BJ (cell line): ENCODE measurements at regions of chr16 and their contacts with region 1.

Region 1: GRCh38 chr16:72787514-72788268 is 260.2 kb downstream of the ZFHX3 start:
- DNase-seq: peak; percentile 37
- H3K4me3 ChIP-seq: peak overlapping the region; percentile 43
- H3K27me3 ChIP-seq: no peaks in the 10 kb centered on the region
- CTCF ChIP-seq: no peak

Region 2: GRCh38 chr16:72658888-72659717 is 128.6 kb before region 1 on chr16:
- CTCF ChIA-PET with region 1: no interaction called
- POLR2A ChIA-PET with region 1: interaction called, 13 read pairs
- DNase-seq: no peak
- H3K4me3 ChIP-seq: no peak overlapping the region
- H3K27me3 ChIP-seq: no peaks in the 10 kb centered on the region
- CTCF ChIP-seq: no peak

Region 3: DNA sequence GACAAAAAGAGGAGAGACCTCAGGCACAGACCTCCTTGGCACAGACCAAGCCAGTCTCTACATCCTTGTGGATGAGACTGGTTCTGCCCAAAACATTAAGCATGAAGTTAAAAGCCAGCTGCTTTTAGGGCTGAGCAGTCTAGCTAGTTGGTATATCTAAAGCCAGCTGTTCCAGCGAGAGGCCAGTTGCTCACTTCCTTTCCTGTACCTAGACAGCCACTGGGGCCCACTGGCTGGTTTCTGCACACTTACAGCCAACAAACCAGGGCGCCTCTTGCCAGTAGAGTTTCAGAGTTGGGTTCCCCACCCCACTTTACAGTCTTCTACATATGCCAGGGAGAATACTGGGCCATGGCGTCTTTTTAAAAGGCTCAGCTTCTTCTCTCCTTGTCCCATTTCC is 17.8 kb after region 1 on chr16:
- CTCF ChIA-PET with region 1: interaction called, 4 read pairs
- POLR2A ChIA-PET with region 1: interaction called, 15 read pairs
- DNase-seq: no peak
- H3K4me3 ChIP-seq: no peak overlapping the region
- H3K27me3 ChIP-seq: no peaks in the 10 kb centered on the region
- CTCF ChIP-seq: no peak